ENCODE measurements at regions of chr2 and their contacts with region 1.

Region 1: GRCh38 chr2:173164396-173164795 is 88.8 kb downstream of the MAP3K20 start:
- DNase-seq: no peak
- ATAC-seq: no peak
- H3K4me3 ChIP-seq: no peak overlapping the region
- H3K27ac ChIP-seq: no peak overlapping the region
- H3K4me1 ChIP-seq: peaks cover 13% of the 10 kb centered on the region
- H3K27me3 ChIP-seq: no peaks in the 10 kb centered on the region
- CTCF ChIP-seq: no peak
- EP300 ChIP-seq: no peak
- POLR2A ChIP-seq: no peak
- RAD21 ChIP-seq: no peak

Region 2: GRCh38 chr2:172972005-172972619 is 192.3 kb before region 1 on chr2:
- CTCF ChIA-PET with region 1: no interaction called
- POLR2A ChIA-PET with region 1: no interaction called
- in situ Hi-C with region 1: no loop called
- intact Hi-C with region 1: loop called (anchors 1 kb)
- DNase-seq: peak; percentile 52
- ATAC-seq: peak; percentile 70
- H3K4me3 ChIP-seq: no peak overlapping the region
- H3K27ac ChIP-seq: no peak overlapping the region
- H3K4me1 ChIP-seq: peaks cover 17% of the 10 kb centered on the region
- H3K27me3 ChIP-seq: peaks cover 0 to 11% of the 10 kb centered on the region in 2 experiments; a peak in 2 of 5 replicates
- CTCF ChIP-seq: peak; percentile 78
- EP300 ChIP-seq: no peak
- POLR2A ChIP-seq: no peak
- RAD21 ChIP-seq: no peak

Region 3: DNA sequence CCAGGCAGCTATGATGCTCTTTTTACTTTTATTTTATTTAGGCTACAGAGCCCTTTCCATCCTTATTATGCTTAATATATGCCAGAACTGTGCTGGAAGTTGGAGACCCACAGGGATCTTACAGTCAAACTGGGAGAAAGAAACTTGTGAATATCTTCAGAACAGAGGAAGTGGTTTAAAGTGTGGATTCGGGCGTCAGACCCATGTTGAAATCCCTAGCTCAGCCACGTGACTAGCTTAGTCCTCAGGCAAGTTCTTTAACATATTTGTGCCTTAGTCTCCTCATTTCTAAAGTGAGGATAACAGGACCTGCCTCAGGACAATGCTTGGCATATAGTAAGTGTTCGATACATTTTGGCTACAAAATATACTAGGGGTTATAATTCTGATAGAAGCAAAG is 29.7 kb before region 1 on chr2:
- CTCF ChIA-PET with region 1: no interaction called
- POLR2A ChIA-PET with region 1: no interaction called
- in situ Hi-C with region 1: no loop called
- intact Hi-C with region 1: no loop called
- DNase-seq: no peak
- ATAC-seq: no peak
- H3K4me3 ChIP-seq: no peak overlapping the region
- H3K27ac ChIP-seq: no peak overlapping the region
- H3K4me1 ChIP-seq: no peaks in the 10 kb centered on the region
- H3K27me3 ChIP-seq: no peaks in the 10 kb centered on the region
- CTCF ChIP-seq: no peak
- EP300 ChIP-seq: no peak
- POLR2A ChIP-seq: no peak
- RAD21 ChIP-seq: no peak

Region 4: GRCh38 chr2:173175222-173175621 is 10.8 kb after region 1 on chr2:
- CTCF ChIA-PET with region 1: no interaction called
- POLR2A ChIA-PET with region 1: no interaction called
- in situ Hi-C with region 1: no loop called
- intact Hi-C with region 1: no loop called
- DNase-seq: no peak
- ATAC-seq: no peak
- H3K4me3 ChIP-seq: no peak overlapping the region
- H3K27ac ChIP-seq: no peak overlapping the region
- H3K4me1 ChIP-seq: no peaks in the 10 kb centered on the region
- H3K27me3 ChIP-seq: no peaks in the 10 kb centered on the region
- CTCF ChIP-seq: no peak
- EP300 ChIP-seq: no peak
- POLR2A ChIP-seq: no peak
- RAD21 ChIP-seq: no peak